Heart right ventricle (tissue), 16 donors: ENCODE measurements at regions of chr4 and their contacts with region 1.

Region 1: DNA sequence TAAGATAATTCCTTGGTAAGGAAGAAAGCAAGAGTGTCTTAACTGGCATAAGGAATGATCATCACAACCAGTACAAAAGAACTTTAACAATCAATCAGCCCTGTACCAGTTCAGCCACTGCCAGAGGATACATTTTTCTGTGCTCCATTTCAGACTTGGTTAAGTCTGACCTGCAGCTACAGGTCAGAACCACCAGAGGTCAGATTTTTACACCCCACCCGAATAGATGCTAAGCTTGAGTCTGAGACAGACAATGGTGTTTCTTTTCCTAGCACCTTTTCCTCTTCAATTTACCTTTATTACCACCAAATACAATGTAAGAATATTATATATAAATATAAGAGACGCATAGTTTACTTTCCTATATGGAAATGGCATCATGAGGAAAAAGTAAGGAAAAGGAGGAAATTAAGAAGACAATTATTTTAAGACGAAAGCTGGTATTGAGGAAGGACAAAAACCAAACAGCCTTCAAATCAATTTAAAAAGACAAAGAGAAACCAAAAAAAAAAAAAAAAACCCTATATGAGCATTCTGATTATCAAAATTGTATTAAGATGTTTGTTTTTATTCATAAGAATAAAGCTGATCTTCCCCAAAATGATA is 215.3 kb upstream of the TTC29 start:
- DNase-seq: peak in 1 of 2 donors; percentile 20
- ATAC-seq: peak in 6 of 8 donors; percentile 34 to 68 (median 60)
- H3K4me3 ChIP-seq: no peak overlapping the region
- H3K27ac ChIP-seq: no peak overlapping the region
- H3K4me1 ChIP-seq: peaks cover 0 to 18% (median 0%) of the 10 kb centered on the region in 9 donors
- H3K27me3 ChIP-seq: peaks cover 0 to 14% (median 0%) of the 10 kb centered on the region in 7 donors
- CTCF ChIP-seq: peak; percentile 56 to 84 (median 77)

Region 2: GRCh38 chr4:147118528-147118927 is 42.5 kb before region 1 on chr4:
- intact Hi-C with region 1: loop called in 2 of 10 experiments (anchors 5 kb)
- DNase-seq: peak in 1 of 2 donors; percentile 49
- ATAC-seq: peak; percentile 67 to 84 (median 76)
- H3K4me3 ChIP-seq: no peak overlapping the region
- H3K27ac ChIP-seq: peak overlapping the region in 5 of 10 donors; percentile 9 to 60 (median 45)
- H3K4me1 ChIP-seq: peaks cover 3 to 39% (median 28%) of the 10 kb centered on the region in 9 donors
- H3K27me3 ChIP-seq: no peaks in the 10 kb centered on the region
- CTCF ChIP-seq: no peak

Region 3: DNA sequence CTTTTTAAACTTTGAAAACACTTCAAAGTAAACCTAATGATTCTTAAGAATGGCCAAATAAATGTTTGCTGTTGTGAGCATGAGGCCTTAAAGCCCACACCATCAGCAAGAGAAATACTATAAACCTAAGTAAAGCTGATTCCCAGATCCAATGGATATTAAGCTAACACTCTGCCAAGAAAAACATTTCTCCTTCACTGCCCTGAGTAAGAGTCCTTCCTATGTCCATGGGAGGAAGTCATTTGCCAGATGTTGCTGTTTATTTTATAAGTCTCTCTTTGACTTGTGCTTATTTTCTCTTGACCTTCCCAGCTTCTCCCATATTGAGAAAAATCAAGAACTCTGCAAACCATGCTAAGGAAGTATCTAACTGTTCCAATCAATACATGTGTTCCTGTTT is 165.6 kb after region 1 on chr4:
- intact Hi-C with region 1: loop called in 1 of 10 experiments (anchors 5 kb)
- DNase-seq: no peak
- ATAC-seq: peak in 6 of 8 donors; percentile 39 to 82 (median 58)
- H3K4me3 ChIP-seq: no peak overlapping the region
- H3K27ac ChIP-seq: peak overlapping the region in 6 of 10 donors; percentile 24 to 65 (median 55)
- H3K4me1 ChIP-seq: peaks cover 0 to 28% (median 15%) of the 10 kb centered on the region in 9 donors
- H3K27me3 ChIP-seq: no peaks in the 10 kb centered on the region
- CTCF ChIP-seq: no peak

Region 4: DNA sequence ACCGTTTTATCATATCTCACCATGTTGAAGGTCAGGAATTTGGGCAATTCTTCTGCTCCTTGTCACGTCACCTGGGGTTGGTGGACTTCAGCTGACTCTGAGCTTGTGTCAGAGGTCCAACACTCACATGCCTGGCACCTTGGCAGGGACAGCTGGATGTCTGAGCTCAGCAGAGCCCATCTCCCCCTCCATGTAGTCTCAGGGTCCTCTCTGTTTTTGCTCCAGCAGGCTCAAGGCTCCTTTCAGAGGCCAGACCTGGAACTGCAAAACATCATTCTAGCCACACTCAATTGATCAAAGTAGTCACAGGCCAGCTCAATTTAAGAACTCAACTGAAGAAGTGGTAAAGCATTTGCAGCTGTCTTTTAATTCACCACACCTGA is 365.3 kb after region 1 on chr4:
- intact Hi-C with region 1: loop called in 1 of 10 experiments (anchors 5 kb)
- DNase-seq: peak in 1 of 2 donors; percentile 37
- ATAC-seq: peak in 6 of 8 donors; percentile 33 to 79 (median 70)
- H3K4me3 ChIP-seq: no peak overlapping the region
- H3K27ac ChIP-seq: peak overlapping the region in 2 of 10 donors; percentile 7 to 27
- H3K4me1 ChIP-seq: peaks cover 0 to 23% (median 4%) of the 10 kb centered on the region in 9 donors
- H3K27me3 ChIP-seq: no peaks in the 10 kb centered on the region
- CTCF ChIP-seq: peak in 4 of 9 donors; percentile 20 to 38 (median 30)